ENCODE measurements at regions of chr7 and their contacts with region 1.

Region 1: DNA sequence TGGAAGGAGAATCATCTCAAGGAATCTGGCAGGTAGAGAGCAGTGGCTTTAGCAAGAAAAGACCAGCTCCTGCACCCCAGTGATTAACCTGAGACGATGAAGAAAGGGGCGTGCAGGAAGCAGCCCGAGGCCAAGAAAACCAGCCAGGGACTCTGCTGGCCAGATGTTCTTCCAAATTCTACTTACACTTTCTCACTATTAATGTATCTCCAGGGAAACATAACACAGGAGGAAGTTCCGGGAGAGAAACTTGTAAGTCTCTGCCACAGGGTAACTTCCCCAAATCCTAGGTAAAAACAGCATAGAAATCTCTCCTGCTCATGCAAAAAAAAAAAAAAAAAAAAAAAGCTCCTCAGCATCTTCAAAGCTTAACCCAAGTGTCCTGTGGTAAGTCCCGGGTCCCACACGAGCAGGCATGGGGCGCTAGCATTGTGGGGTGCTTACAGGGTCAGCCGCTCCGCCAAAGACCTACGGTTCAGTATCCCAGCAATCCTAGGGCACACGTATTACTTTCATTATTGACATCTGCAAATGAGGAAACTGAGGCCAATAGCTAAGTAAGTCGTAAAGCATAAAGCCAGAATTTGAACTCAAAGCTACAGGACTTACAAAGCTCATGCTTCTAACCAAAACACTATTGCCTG is 97.2 kb upstream of the GNA12 start:
- DNase-seq: no peak
- H3K4me3 Mint-ChIP-seq: no peak overlapping the region
- H3K27ac Mint-ChIP-seq: no peak overlapping the region
- H3K4me1 Mint-ChIP-seq: no peaks in the 10 kb centered on the region
- H3K27me3 Mint-ChIP-seq: no peaks in the 10 kb centered on the region
- CTCF ChIP-seq: no peak

Region 2: DNA sequence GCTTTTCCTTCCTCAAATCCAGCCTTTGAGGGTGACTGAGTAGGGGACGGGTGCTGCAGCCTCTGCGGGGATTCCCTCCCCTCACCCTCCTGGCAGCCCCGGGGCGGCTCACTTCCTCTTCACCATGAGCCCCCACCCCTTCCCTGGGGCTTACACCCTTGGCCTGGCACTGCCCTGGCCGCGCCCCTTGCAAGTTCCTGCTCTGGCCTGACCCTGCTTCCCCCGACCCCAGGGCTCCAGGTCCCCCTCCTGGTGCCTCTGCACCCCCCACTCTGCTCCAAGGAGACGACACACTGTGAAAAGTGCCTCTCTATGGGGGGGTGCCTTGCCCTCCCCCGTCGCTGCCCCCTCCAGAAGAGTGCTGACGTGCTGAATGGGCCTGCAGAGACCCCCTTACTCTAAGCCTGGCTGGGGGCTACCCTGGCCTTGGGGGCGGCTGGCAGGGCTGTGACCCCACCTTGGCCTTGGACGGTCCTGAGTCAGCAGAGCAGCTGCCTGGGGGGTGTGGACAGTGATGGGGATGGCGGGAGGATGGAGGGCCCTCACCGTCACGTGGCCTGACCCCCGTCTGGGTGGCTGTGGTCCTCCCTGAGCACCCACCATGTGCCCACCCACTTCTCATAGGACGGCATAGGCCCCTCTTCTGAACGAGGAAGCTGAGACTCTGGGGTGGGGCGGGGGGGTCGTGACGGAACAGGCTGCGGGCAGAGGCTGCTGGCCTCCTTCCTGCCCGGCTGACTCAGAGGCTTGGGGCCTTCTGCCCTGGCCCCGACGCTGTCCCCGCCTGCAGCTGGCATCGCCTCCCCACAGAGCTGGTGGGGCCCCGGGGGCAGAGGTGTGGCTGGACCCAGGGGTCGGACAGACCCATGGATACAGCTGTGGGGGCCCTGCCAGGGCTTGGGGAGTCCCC is 411.9 kb before region 1 on chr7:
- CTCF ChIA-PET with region 1: no interaction called
- intact Hi-C with region 1: no loop called
- DNase-seq: peak; percentile 84
- H3K4me3 Mint-ChIP-seq: peak overlapping the region; percentile 53
- H3K27ac Mint-ChIP-seq: peak overlapping the region; percentile 88
- H3K4me1 Mint-ChIP-seq: peaks cover 50% of the 10 kb centered on the region
- H3K27me3 Mint-ChIP-seq: no peaks in the 10 kb centered on the region
- CTCF ChIP-seq: no peak

Region 3: GRCh38 chr7:2926120-2926895 is 15.0 kb before region 1 on chr7:
- CTCF ChIA-PET with region 1: no interaction called
- intact Hi-C with region 1: no loop called
- DNase-seq: no peak
- H3K4me3 Mint-ChIP-seq: no peak overlapping the region
- H3K27ac Mint-ChIP-seq: no peak overlapping the region
- H3K4me1 Mint-ChIP-seq: no peaks in the 10 kb centered on the region
- H3K27me3 Mint-ChIP-seq: no peaks in the 10 kb centered on the region
- CTCF ChIP-seq: no peak

Region 4: DNA sequence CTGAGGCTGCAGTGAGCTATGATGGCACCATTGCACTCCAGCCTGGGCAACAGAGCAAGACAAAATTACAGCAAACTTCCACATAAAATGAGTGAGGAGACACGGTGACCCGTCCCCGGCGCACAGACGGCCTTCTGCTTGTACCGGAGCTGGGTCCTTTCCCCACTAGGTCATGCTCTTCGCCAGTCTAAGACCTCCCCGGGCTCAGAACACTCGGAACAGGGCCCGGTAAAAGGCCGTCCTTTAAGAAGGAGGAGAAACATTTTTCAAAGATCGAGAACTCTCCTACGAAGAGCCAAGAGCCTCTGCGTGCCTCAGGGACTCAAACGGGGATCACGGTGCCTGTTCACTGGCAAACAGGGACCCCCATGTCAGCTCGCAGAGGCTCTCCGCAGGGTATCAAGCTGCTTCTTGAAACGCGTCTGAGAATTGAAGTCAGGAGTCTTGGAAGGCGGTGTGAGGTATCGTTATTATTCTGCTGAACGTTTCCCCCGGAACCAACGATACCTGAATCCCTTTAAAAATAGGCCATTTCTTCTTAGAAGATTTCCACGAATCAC is 93.3 kb after region 1 on chr7:
- CTCF ChIA-PET with region 1: interaction called, 12 read pairs
- intact Hi-C with region 1: no loop called
- DNase-seq: no peak
- H3K4me3 Mint-ChIP-seq: no peak overlapping the region
- H3K27ac Mint-ChIP-seq: no peak overlapping the region
- H3K4me1 Mint-ChIP-seq: peaks cover 9% of the 10 kb centered on the region
- H3K27me3 Mint-ChIP-seq: no peaks in the 10 kb centered on the region
- CTCF ChIP-seq: no peak